AG04449 (cell line): ENCODE measurements at regions of chr5 and their contacts with region 1.

Region 1: DNA sequence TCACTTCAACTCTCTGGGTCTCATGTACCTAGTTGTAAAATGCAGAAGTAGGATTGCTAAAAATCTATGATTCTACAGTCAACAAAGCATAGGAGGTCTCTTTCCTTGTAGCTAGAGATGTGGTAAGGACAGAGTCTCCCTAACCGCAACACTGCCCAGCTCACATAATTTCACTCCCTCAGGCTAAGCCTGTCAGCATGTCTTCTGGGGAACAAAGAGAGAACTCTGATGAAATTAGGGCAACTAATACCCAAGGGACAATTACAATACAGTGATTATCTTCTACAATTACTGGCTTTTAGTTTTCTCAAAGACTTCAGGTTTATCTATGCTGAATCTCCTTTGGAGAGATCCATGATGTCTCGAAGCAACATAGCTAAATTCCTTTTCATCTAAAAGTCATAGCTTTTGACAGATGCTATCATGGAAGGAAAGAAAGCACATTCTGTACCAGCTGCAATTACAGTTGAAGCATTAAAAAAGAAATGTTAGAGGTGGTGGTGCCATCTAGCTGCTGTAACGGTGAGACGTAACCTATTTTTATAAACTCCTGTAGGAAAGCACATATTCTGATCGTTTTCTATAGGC is 141.1 kb upstream of the TARS1 start:
- DNase-seq: no peak
- H3K4me3 ChIP-seq: no peak overlapping the region
- CTCF ChIP-seq: peak; percentile 42

Region 2: DNA sequence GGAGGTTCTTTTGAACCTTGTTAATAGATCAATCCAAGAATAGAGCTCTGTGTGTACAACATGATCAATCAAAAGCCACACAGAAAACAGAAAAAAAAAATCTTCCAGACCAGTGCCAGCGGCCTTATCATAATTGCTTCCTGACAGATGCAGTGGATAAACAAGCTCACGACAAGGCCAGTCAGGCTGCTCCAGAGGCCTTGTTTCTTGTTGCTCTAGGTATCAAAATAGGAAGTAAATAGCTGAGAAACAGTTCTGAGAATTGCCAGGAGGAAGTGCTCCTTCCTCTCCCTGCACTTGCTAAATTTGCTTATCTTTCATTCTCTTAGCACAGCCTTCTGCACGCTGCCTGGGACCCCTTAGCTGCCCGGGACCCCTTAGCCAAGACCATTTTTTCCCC is 57.9 kb before region 1 on chr5:
- CTCF ChIA-PET with region 1: no interaction called
- POLR2A ChIA-PET with region 1: no interaction called
- DNase-seq: no peak
- H3K4me3 ChIP-seq: no peak overlapping the region
- CTCF ChIP-seq: no peak

Region 3: DNA sequence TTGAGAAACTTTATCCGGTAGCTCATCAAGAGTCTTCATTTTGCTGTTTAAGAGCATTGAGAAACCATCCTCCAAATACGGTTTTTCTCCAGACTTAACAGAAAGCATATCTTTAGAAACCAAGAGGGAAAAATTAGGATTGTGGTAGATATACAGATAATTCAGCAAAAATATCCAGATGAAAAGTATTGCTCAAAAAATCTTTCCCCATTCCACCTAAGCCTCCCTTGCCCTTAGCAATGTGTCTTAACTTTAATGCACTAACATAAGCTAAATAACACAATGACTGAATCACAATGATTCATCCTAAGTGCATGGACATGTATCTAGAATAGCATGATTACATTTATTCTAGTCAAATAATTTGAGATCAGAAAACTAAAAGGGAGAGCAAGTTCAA is 10.7 kb after region 1 on chr5:
- CTCF ChIA-PET with region 1: interaction called, 33 read pairs
- POLR2A ChIA-PET with region 1: interaction called, 8 read pairs
- DNase-seq: peak; percentile 91
- H3K4me3 ChIP-seq: no peak overlapping the region
- CTCF ChIP-seq: no peak